Activated T-helper 2 cell treated with anti-CD3 and anti-CD28 coated beads, Interferon-gamma antibody, Interleukin-2, Interleukin-4, amounts not matched to agents 10 μg/mL and 5 μg/mL and 100 μg/mL, durations not matched to agents 14 hours and 24 hours and 36 hours (primary cell): ENCODE measurements at regions of chr2 and their contacts with region 1.

Region 1: DNA sequence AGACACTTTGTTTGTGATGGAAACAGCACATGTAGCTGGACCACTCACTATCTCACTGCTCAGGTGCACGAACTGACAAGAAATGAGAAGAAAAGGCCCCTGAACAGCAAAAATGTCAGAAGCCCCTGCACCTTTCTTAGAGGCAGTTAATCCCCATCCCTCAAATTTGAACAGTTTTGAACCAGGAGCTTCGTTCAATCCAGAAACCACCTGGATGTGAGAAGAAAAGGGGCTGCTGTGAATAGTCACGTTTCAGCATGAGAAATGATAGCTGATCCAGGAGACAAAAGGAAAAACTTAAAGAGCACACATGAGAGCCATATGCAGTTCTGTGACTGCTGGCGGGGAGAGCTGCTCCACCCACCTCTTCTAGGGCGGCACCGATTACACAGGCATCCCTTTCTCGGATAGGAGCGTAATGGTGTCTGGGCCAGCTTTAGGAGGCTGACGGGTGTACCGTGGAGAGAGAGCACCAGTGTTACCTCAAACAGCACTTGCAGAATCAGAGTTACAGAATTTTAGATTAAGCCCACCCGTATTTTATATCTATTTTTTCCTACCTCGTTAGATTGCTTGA is 117.0 kb upstream of the EML6 start:
- DNase-seq: no peak
- H3K4me3 Mint-ChIP-seq: peak overlapping the region; percentile 31
- H3K27ac Mint-ChIP-seq: peak overlapping the region; percentile 81
- H3K4me1 Mint-ChIP-seq: peaks cover 76% of the 10 kb centered on the region
- H3K27me3 Mint-ChIP-seq: no peaks in the 10 kb centered on the region

Region 2: DNA sequence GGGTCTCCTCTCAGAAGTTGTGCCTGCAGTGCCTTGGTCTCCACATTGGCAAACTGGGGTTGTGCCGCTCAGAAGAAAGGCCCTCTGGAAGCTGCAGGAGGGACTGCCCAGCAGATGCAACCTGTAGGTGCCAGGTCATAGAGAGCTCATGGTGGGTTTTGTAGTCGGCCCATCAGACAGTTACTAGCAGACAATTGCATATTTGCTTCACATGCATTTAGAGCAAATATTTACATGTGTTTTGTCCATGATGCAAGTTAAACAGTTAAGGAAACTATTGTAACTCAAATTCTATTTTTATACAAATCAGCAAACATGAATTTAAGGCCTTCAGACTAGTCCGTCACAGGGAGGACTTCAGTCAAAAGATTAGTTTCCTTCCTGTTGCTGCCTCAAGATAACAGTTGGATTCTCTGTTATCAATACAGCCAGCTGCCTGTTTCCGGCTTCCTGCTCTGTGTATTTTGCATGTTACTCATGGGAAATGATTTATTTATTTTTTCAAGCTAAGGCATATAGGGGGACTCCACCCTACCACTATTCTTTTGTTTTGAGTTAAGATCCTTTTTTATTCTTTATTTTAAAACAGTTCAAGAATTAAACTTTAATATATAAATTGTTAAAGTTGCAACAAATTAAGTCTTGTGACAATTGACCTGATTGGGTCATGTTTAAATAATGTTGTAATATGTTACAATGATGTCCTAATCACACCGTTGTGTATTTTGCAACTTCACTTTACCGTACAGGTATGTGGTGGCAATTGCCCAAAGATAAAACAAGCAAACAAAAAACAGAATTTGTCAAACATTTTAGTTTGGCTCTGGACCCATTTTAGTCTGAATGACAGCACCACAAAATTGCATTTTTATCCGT is 16.9 kb before region 1 on chr2:
- intact Hi-C with region 1: loop called (anchors 2 kb)
- DNase-seq: no peak
- H3K4me3 Mint-ChIP-seq: peak overlapping the region; percentile 62
- H3K27ac Mint-ChIP-seq: peak overlapping the region; percentile 93
- H3K4me1 Mint-ChIP-seq: peaks cover 70% of the 10 kb centered on the region
- H3K27me3 Mint-ChIP-seq: no peaks in the 10 kb centered on the region

Region 3: GRCh38 chr2:54624591-54625071 is 18.1 kb after region 1 on chr2:
- intact Hi-C with region 1: loop called (anchors 2 kb)
- DNase-seq: no peak
- H3K4me3 Mint-ChIP-seq: no peak overlapping the region
- H3K27ac Mint-ChIP-seq: no peak overlapping the region
- H3K4me1 Mint-ChIP-seq: peaks cover 6% of the 10 kb centered on the region
- H3K27me3 Mint-ChIP-seq: no peaks in the 10 kb centered on the region

Region 4: GRCh38 chr2:54652540-54652939 is 46.1 kb after region 1 on chr2:
- intact Hi-C with region 1: no loop called
- DNase-seq: no peak
- H3K4me3 Mint-ChIP-seq: no peak overlapping the region
- H3K27ac Mint-ChIP-seq: peak overlapping the region; percentile 43
- H3K4me1 Mint-ChIP-seq: peaks cover 12% of the 10 kb centered on the region
- H3K27me3 Mint-ChIP-seq: no peaks in the 10 kb centered on the region